HAP-1 (cell line): ENCODE measurements at regions of chr9 and their contacts with region 1.

Region 1: GRCh38 chr9:97398999-97399758 is 12.7 kb upstream of the TDRD7 start:
- DNase-seq: peak; percentile 35 to 77
- H3K4me3 ChIP-seq: no peak overlapping the region
- H3K4me1 ChIP-seq: no peaks in the 10 kb centered on the region
- H3K27me3 ChIP-seq: no peaks in the 10 kb centered on the region

Region 2: DNA sequence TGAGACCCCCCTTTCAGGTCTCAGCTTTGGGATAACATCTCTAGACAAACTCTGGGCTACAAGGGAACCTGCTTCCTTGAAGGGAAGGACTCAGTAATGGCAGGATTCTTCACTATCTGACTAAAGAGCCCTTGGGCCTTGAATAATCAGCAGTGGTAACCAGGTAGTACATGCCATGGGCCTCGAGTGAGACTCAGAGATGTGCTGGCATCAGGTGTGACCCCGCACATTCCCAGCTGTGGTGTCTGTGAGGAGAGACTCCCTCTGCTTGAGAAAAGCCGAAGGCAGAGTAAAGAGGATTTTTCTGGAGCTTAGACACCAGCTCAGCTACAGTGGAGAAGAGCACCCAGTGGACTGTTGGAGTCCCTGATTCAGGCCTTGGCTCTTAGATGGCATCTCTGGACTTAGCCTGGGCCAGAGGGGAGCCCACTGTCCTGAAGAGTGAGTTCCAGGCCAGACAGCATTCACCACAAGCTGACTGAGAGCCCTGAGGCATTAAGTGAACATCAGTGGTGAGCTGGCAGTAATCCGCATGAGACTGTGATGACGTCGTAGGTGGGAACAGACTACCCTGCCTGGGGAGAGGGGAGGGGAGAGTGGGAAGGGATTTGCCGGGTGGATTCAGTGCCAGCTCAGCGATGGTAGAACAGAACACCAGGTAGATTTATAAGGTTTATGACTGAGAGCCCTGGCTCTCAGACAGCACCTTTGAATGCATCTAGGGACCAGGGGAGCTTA is 539.5 kb before region 1 on chr9:
- in situ Hi-C with region 1: loop called (anchors 10 kb)
- DNase-seq: no peak
- H3K4me3 ChIP-seq: no peak overlapping the region
- H3K4me1 ChIP-seq: peaks cover 3% of the 10 kb centered on the region; the same call in 1 of the 2 replicates
- H3K27me3 ChIP-seq: no peaks in the 10 kb centered on the region

Region 3: DNA sequence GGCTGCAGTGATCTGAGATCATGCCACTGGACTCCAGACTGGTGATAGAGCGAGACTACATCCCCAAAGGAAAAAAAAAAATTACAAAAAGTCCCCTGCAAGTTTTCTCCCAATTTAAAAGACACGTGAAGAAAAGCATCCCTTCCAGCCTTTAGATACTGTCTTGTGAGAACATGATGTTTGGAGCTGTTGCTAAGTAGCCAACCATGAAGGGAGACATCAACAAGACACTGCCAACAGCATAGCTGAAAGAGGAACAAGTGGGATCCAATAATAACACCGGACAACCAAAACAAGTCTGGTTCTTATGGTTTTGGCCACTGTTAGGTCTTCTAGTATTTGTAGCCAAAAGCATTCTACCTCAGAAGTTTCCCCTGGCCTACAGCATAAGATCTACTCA is 210.6 kb before region 1 on chr9:
- in situ Hi-C with region 1: no loop called
- DNase-seq: no peak
- H3K4me3 ChIP-seq: no peak overlapping the region
- H3K4me1 ChIP-seq: no peaks in the 10 kb centered on the region
- H3K27me3 ChIP-seq: no peaks in the 10 kb centered on the region

Region 4: GRCh38 chr9:97315550-97315949 is 83.6 kb before region 1 on chr9:
- in situ Hi-C with region 1: no loop called
- DNase-seq: no peak
- H3K4me3 ChIP-seq: no peak overlapping the region
- H3K4me1 ChIP-seq: no peaks in the 10 kb centered on the region
- H3K27me3 ChIP-seq: no peaks in the 10 kb centered on the region